ENCODE measurements at regions of chr10 and their contacts with region 1.

Region 1: DNA sequence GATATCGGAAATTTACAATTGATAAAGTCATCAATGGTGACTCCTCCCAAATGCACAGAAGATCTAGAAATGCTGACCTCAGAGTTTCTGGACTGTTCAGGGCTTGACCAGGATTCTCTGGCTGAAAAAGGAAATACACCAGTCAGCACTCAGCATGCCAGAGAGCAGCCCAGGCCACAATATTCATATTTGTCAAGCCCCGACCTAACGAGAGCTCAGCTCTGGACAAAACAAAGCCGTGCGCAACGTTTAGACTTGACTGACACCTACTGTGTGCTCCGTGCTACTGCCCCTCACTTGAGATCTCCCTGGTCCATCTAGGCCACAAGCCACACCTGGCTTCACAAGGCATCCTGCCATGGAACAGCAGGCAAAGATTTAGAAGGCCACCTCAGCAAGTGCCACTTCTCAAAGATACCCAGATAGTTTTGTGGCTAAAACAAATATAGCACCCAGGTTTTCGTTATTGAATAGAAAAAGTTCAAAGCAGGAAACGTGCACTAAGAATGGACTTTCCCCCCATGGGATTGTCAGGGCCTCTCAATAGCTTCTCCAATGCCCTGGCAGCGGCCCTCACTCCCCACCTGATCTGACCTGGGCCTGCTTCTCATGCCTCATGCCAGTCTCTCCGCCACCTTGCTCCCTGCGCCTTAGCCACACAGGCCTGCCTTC is 218.3 kb downstream of the FAM107B start:
- DNase-seq: peak in 4 of 9 experiments; percentile 5 to 76 (median 56)
- ATAC-seq: peak; percentile 24
- H3K4me3 ChIP-seq: no peak overlapping the region
- H3K4me3 Mint-ChIP-seq: peak overlapping the region; percentile 27
- H3K27ac ChIP-seq: peak overlapping the region in 1 of 2 experiments; percentile 82
- H3K27ac Mint-ChIP-seq: peak overlapping the region; percentile 86
- H3K4me1 ChIP-seq: peaks cover 98% of the 10 kb centered on the region
- H3K4me1 Mint-ChIP-seq: peaks cover 93% of the 10 kb centered on the region
- H3K27me3 ChIP-seq: no peaks in the 10 kb centered on the region
- H3K27me3 Mint-ChIP-seq: no peaks in the 10 kb centered on the region
- CTCF ChIP-seq: no peak

Region 2: GRCh38 chr10:14195433-14195832 is 361.0 kb before region 1 on chr10:
- CTCF ChIA-PET with region 1: no interaction called
- POLR2A ChIA-PET with region 1: no interaction called
- intact Hi-C with region 1: loop called in 1 of 2 experiments (anchors 5 kb)
- DNase-seq: no peak
- ATAC-seq: no peak
- H3K4me3 ChIP-seq: no peak overlapping the region
- H3K4me3 Mint-ChIP-seq: no peak overlapping the region
- H3K27ac ChIP-seq: no peak overlapping the region
- H3K27ac Mint-ChIP-seq: no peak overlapping the region
- H3K4me1 ChIP-seq: no peaks in the 10 kb centered on the region
- H3K4me1 Mint-ChIP-seq: no peaks in the 10 kb centered on the region
- H3K27me3 ChIP-seq: peaks cover 2 to 3% of the 10 kb centered on the region in 2 experiments
- H3K27me3 Mint-ChIP-seq: peaks cover 36% of the 10 kb centered on the region
- CTCF ChIP-seq: no peak

Region 3: DNA sequence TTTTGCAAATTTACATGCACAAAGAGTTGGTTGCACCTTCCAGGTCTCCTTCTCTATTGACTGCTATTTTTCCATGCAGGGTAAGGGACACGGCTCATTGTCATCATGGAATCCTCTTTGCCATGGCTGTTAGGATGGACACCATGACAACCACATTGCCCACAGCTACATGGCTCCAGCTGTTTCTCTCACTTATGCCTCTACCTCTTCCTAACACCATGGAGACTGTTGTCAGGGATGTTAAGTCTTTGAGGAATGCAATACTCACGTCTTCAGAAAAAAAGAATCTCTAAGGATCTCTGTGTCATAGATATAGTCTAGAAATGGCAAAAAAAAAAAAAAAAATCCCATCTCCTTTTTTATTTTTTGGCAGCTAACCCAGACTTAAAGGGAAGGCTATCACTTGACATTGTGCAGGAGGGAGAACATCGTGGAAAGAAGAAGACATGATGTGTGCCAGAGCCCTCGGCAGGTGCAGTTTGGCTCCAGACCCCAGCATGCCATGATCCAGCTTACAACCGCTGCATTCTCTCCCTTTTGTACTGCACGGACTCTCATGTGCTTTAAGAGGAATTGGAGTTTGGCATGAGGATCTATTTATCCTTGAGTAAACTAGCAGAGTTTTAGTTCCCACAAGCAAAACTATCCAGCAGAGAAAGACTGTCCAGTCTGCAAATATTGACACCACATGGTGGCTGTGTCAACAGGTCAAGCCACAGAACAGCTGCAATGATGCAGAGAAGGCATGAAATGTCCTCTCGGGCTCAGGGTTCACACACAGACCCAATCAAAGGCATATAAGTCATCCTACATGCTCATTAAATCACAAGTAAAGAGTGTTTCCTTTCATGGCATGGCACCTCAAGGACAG is 296.5 kb before region 1 on chr10:
- CTCF ChIA-PET with region 1: no interaction called
- POLR2A ChIA-PET with region 1: no interaction called
- intact Hi-C with region 1: no loop called
- DNase-seq: no peak
- ATAC-seq: no peak
- H3K4me3 ChIP-seq: no peak overlapping the region
- H3K4me3 Mint-ChIP-seq: no peak overlapping the region
- H3K27ac ChIP-seq: no peak overlapping the region
- H3K27ac Mint-ChIP-seq: no peak overlapping the region
- H3K4me1 ChIP-seq: no peaks in the 10 kb centered on the region
- H3K4me1 Mint-ChIP-seq: no peaks in the 10 kb centered on the region
- H3K27me3 ChIP-seq: peaks cover 0 to 2% of the 10 kb centered on the region in 2 experiments
- H3K27me3 Mint-ChIP-seq: peaks cover 19% of the 10 kb centered on the region
- CTCF ChIP-seq: no peak

Region 4: DNA sequence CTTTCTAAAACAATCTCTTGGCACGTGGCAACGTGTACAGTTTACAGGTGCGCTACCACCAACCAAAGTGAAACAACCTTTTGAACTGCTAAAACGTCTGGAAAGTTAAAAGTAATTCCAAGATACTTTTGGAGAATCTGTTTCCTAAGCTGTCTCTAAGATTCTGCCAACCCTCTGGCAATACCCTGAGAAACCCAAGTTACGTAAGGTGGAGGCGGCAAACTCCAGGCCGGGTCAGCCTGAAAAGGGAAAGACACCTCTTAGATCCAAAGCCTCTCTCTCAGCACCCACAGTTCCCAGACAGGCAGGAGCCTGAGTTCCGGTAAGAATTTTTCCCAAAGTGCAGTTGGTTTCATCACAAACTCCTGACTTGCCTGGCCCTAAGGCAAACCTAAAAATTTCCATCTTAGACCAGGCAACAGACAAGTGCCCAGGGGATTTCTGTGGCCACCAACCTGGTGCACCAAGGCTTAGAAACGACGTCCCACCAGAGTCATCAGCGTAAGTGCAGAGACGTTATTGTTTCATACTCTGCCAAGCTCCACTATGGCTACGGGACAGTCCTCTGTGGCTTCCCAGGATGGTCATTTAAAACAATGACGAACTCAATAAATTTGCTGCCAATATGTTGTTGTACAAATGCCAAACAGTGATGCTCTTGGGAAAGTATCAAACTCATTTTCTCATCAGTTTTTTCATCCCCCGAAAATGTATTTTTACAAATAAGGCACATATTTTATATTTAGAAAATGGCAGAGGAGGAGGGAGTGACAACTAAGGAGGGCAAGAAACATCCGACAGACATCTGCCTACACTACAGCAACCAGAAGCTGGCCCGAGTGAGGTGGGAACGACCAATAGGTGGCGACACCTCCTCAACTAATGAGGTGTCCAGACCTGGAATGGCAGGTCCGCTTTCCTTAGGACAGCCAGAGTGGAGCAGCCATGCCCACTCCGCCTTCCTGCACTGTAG is 19.9 kb before region 1 on chr10:
- CTCF ChIA-PET with region 1: interaction called, 5 read pairs
- POLR2A ChIA-PET with region 1: interaction called, 4 read pairs
- intact Hi-C with region 1: loop called in 1 of 2 experiments (anchors 2 kb)
- DNase-seq: peak in 7 of 9 experiments; percentile 28 to 69 (median 52)
- ATAC-seq: peak; percentile 39
- H3K4me3 ChIP-seq: no peak overlapping the region
- H3K4me3 Mint-ChIP-seq: no peak overlapping the region
- H3K27ac ChIP-seq: peak overlapping the region in 1 of 2 experiments; percentile 27
- H3K27ac Mint-ChIP-seq: peak overlapping the region; percentile 57
- H3K4me1 ChIP-seq: peaks cover 47% of the 10 kb centered on the region
- H3K4me1 Mint-ChIP-seq: peaks cover 96% of the 10 kb centered on the region
- H3K27me3 ChIP-seq: no peaks in the 10 kb centered on the region
- H3K27me3 Mint-ChIP-seq: no peaks in the 10 kb centered on the region
- CTCF ChIP-seq: peak; percentile 39

Region 5: DNA sequence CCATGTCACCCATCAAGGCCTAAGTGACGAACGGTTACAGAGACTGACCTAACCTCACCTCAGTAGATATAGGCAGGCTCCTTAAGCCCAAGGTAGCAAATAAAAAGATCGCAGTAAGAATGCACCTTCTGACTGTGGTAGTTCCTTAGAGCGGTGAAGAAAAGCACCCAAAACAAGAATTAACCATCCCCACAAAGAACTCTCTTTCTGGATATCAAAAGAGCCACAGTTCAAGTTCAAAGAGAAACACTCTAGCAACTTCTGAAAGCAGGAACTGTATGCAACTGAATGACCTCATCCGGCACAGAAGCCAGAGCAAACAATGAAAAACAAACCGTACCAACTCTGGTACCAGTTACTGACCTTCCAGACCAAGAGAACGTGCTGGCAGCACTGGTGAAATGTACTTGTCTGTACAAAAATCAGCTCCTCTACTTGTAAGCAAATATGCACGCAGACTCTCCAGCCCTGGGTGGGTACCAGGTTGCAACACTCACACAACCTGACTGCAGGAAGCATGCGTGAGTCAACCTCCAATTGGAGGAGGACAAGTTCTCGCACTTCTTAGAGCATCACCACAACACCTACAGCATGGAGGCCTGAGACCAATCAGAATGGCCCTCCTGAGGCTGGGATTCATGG is 15.6 kb after region 1 on chr10:
- CTCF ChIA-PET with region 1: interaction called, 6 read pairs
- POLR2A ChIA-PET with region 1: interaction called, 15 read pairs
- intact Hi-C with region 1: loop called in 1 of 2 experiments (anchors 1 kb)
- DNase-seq: peak; percentile 46 to 91 (median 68)
- ATAC-seq: peak; percentile 66
- H3K4me3 ChIP-seq: peak overlapping the region; percentile 58 to 65
- H3K4me3 Mint-ChIP-seq: peak overlapping the region; percentile 88
- H3K27ac ChIP-seq: peak overlapping the region; percentile 82 to 89
- H3K27ac Mint-ChIP-seq: peak overlapping the region; percentile 97
- H3K4me1 ChIP-seq: peaks cover 66% of the 10 kb centered on the region
- H3K4me1 Mint-ChIP-seq: peaks cover 89% of the 10 kb centered on the region
- H3K27me3 ChIP-seq: no peaks in the 10 kb centered on the region
- H3K27me3 Mint-ChIP-seq: no peaks in the 10 kb centered on the region
- CTCF ChIP-seq: no peak

Region 6: DNA sequence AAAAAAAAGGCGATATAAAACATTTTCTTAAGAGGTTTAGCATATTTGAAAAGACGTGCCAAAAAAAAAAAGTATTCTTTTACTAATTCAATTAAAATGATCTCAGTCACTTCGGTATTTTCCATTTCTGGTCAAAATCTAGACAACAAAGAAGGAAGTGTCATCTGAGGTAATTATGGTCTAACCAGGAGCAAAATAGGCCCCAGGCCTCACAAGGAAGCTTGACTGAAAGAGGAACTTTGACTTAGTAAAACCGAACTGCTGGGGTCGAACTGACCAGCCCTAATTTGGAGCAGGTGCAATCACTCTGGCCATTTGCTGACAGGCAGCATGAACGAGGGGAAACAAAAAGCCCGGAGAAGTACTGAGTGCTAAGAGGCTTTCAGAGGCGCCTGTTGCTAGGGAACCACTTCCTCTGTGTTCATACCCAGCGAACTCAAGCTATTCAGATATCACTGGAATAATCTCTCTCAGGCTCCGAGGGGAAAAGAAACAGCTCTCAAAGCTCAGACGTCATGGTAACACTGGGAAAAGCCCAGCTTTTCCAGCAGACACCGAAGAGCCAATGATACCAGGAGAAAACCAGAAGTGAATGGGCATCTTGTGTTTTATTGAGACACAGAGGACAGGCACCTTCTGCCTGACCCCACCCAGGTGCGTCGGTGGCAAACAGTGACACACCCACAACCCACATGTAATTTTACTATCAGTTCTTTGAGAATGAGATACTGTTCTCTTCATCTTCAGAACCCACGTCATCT is 91.8 kb after region 1 on chr10:
- CTCF ChIA-PET with region 1: interaction called, 7 read pairs
- POLR2A ChIA-PET with region 1: interaction called, 3 read pairs
- intact Hi-C with region 1: loop called in 1 of 2 experiments (anchors 5 kb)
- DNase-seq: peak; percentile 52 to 92 (median 74)
- ATAC-seq: peak; percentile 86
- H3K4me3 ChIP-seq: peak overlapping the region; percentile 41 to 50
- H3K4me3 Mint-ChIP-seq: peak overlapping the region; percentile 86
- H3K27ac ChIP-seq: peak overlapping the region; percentile 89 to 94
- H3K27ac Mint-ChIP-seq: peak overlapping the region; percentile 99
- H3K4me1 ChIP-seq: peaks cover 26% of the 10 kb centered on the region
- H3K4me1 Mint-ChIP-seq: peaks cover 48% of the 10 kb centered on the region
- H3K27me3 ChIP-seq: no peaks in the 10 kb centered on the region
- H3K27me3 Mint-ChIP-seq: no peaks in the 10 kb centered on the region
- CTCF ChIP-seq: no peak

Region 7: DNA sequence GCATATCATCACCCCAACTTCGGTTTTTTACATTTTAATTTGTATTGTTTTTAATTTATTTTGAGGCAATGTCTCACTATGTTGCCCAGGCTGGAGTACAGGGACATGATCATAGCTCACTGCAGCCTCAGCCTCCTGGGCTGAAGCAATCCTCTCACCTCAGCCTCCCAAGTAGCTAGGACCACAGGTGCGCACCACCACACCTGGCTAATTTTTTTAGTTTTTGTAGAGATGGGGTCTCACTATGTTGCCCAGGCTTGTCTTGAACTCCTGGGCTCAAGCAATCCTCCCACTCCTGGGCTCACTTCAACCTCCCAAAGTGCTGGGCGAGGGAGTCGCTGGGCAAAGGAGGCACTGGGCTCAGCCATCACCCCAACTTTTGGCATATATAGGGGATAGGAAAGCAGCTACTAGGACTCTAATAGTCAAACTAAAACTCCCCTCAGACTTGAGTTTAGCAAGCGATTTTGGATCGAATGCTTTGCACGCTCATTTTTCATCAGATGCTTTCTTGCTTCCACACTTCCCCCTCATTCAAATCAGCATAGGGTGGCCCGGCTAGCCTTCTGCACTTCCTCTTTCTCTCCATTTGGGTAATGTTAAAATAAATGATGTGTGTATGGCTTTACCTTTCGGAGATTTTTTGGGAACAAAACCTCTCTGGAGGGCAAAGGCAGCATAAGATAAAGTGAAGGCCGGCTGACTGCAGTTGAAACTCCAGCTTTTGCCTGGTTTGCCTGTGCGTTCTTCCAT is 632.9 kb after region 1 on chr10:
- CTCF ChIA-PET with region 1: no interaction called
- POLR2A ChIA-PET with region 1: no interaction called
- intact Hi-C with region 1: no loop called
- DNase-seq: no peak
- ATAC-seq: no peak
- H3K4me3 ChIP-seq: no peak overlapping the region
- H3K4me3 Mint-ChIP-seq: no peak overlapping the region
- H3K27ac ChIP-seq: peak overlapping the region in 1 of 2 experiments; percentile 18
- H3K27ac Mint-ChIP-seq: no peak overlapping the region
- H3K4me1 ChIP-seq: peaks cover 41% of the 10 kb centered on the region
- H3K4me1 Mint-ChIP-seq: peaks cover 45% of the 10 kb centered on the region
- H3K27me3 ChIP-seq: no peaks in the 10 kb centered on the region
- H3K27me3 Mint-ChIP-seq: no peaks in the 10 kb centered on the region
- CTCF ChIP-seq: no peak

Measured in CD8-positive, alpha-beta T cell (primary cell).